Endothelial cell of umbilical vein (primary cell): ENCODE measurements at regions of chr2 and their contacts with region 1.

Region 1: DNA sequence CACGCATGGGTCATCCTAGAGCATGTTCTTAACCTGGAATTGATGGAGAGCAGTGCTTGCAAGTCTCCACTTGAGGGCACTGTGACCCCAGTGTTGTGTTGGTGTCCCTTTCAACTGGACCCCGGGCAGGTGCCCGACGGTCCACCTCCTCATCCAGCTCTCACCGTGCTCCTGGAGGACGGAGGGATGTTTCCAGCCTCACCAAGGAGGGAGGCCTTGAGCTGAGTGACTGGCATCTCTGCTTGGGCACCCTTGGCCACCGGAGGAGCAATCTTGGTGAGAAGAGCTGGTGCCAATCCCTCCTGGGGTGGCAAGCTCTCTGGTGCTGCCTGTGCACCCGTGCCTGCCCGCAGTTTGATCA is 45.4 kb upstream of the ASB18 start:
- DNase-seq: peak; percentile 39
- H3K4me3 ChIP-seq: no peak overlapping the region
- H3K27ac ChIP-seq: no peak overlapping the region
- H3K4me1 ChIP-seq: no peaks in the 10 kb centered on the region
- H3K27me3 ChIP-seq: no peaks in the 10 kb centered on the region
- CTCF ChIP-seq: peak; percentile 61 to 76
- POLR2A ChIP-seq: no peak

Region 2: GRCh38 chr2:235766278-235766677 is 543.4 kb before region 1 on chr2:
- CTCF ChIA-PET with region 1: interaction called, 3 read pairs
- POLR2A ChIA-PET with region 1: no interaction called
- dilution Hi-C with region 1: no loop called
- intact Hi-C with region 1: loop called (anchors 1 kb)
- DNase-seq: peak; percentile 90
- H3K4me3 ChIP-seq: no peak overlapping the region
- H3K27ac ChIP-seq: no peak overlapping the region
- H3K4me1 ChIP-seq: no peaks in the 10 kb centered on the region
- H3K27me3 ChIP-seq: no peaks in the 10 kb centered on the region
- CTCF ChIP-seq: peak; percentile 67 to 73
- POLR2A ChIP-seq: no peak

Region 3: DNA sequence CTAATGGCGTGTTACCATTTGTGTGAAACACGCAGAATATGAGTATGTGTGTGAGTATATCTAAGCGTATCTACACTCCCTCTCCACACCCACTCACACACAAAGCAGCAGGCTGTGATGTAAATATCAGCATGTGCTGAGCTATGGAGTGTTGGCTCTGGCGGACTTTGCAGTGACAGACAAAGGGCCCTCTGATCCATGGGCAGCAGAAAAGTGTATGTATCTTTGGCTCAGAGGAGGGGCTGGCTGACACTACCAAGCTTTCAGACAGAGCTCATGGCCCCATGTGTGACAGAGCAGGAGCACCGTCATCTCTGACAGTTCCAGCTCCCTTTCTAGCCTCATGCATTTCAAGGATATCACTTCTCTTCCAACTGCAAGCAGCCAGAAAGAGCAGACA is 11.8 kb after region 1 on chr2:
- CTCF ChIA-PET with region 1: interaction called, 11 read pairs
- POLR2A ChIA-PET with region 1: no interaction called
- dilution Hi-C with region 1: no loop called
- intact Hi-C with region 1: no loop called
- DNase-seq: no peak
- H3K4me3 ChIP-seq: no peak overlapping the region
- H3K27ac ChIP-seq: no peak overlapping the region
- H3K4me1 ChIP-seq: no peaks in the 10 kb centered on the region
- H3K27me3 ChIP-seq: no peaks in the 10 kb centered on the region
- CTCF ChIP-seq: no peak
- POLR2A ChIP-seq: no peak